Calu3 (cell line): ENCODE measurements at regions of chr1 and their contacts with region 1.

Region 1: DNA sequence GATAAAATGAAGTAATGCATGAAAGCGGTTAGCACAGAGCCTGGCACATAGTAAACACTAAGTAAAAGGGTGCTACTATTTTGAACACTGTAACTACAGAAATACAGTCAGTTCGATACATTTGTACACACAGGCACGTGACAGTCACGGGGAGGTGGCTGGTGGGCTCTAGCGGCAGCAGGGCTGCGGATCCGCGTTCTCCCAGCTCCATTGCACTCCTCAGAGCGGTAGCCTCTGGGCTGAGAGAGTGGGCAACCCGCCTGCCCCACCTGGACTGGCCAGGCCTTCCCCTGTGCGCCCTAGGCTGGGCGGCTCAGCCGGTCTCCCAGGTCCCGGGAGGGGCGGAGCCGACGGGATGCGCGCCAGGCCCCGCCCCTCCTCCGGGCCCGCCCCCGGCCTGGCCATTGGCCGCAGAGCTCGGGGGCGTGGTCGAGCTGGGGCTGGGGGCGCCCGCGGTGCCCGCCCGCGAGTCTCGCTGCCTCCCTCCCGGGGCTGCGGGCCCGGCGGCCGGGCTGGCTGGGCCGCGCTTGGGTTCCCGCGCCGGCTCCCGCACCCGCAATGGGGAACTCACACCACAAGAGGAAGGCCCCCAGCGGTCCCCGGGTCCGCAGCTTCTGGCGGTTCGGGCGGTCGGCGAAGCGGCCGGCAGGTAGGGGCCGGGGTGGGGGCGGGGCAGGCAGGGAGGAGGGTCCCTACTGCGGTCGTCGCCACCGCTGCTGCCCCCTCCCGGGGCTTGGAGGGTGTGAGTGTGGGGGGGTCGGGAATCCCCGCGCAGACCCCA is 51.2 kb upstream of the SYNC start:
- DNase-seq: peak; percentile 93
- H3K4me3 Mint-ChIP-seq: peak overlapping the region; percentile 92
- H3K27ac Mint-ChIP-seq: peak overlapping the region; percentile 79
- H3K4me1 Mint-ChIP-seq: peaks cover 55% of the 10 kb centered on the region
- H3K27me3 Mint-ChIP-seq: no peaks in the 10 kb centered on the region
- CTCF ChIP-seq: no peak

Region 2: GRCh38 chr1:32741413-32742198 is 12.1 kb before region 1 on chr1:
- CTCF ChIA-PET with region 1: interaction called, 11 read pairs
- intact Hi-C with region 1: no loop called
- DNase-seq: peak; percentile 55
- H3K4me3 Mint-ChIP-seq: peak overlapping the region; percentile 77
- H3K27ac Mint-ChIP-seq: peak overlapping the region; percentile 82
- H3K4me1 Mint-ChIP-seq: peaks cover 43% of the 10 kb centered on the region
- H3K27me3 Mint-ChIP-seq: no peaks in the 10 kb centered on the region
- CTCF ChIP-seq: peak; percentile 52

Region 3: DNA sequence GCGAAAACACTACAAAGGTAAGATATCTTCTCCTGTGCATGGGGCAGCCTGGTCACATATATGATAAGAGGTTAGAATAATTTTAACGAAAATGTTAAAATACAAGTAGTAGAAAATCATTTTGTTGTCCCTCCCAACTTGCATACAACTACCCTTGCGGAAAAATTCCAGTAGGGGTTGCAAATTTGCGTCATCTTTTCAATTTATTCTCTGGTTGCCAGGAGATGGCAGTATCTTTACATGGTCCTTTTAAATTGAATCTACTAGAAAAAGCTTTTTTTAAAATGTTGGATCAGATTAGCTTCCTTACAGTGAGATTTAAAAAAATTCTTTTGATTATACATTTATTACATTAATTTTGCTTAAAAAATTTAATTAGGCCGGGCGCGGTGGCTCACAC is 74.6 kb after region 1 on chr1:
- CTCF ChIA-PET with region 1: no interaction called
- intact Hi-C with region 1: no loop called
- DNase-seq: no peak
- H3K4me3 Mint-ChIP-seq: no peak overlapping the region
- H3K27ac Mint-ChIP-seq: no peak overlapping the region
- H3K4me1 Mint-ChIP-seq: no peaks in the 10 kb centered on the region
- H3K27me3 Mint-ChIP-seq: no peaks in the 10 kb centered on the region
- CTCF ChIP-seq: peak; percentile 16